Gastrocnemius medialis (tissue), 4 donors: ENCODE measurements at regions of chr6 and their contacts with region 1.

Region 1: GRCh38 chr6:5746053-5746758 is 260.5 kb downstream of the NRN1 start:
- DNase-seq: peak in 1 of 2 donors; percentile 53
- ATAC-seq: peak; percentile 73 to 80
- H3K4me3 ChIP-seq: no peak overlapping the region
- H3K27ac ChIP-seq: no peak overlapping the region
- H3K4me1 ChIP-seq: peaks cover 19 to 22% of the 10 kb centered on the region in 2 donors
- H3K27me3 ChIP-seq: no peaks in the 10 kb centered on the region
- CTCF ChIP-seq: peak in 4 of 5 experiments; percentile 21 to 53 (median 50)
- POLR2A ChIP-seq: no peak

Region 2: DNA sequence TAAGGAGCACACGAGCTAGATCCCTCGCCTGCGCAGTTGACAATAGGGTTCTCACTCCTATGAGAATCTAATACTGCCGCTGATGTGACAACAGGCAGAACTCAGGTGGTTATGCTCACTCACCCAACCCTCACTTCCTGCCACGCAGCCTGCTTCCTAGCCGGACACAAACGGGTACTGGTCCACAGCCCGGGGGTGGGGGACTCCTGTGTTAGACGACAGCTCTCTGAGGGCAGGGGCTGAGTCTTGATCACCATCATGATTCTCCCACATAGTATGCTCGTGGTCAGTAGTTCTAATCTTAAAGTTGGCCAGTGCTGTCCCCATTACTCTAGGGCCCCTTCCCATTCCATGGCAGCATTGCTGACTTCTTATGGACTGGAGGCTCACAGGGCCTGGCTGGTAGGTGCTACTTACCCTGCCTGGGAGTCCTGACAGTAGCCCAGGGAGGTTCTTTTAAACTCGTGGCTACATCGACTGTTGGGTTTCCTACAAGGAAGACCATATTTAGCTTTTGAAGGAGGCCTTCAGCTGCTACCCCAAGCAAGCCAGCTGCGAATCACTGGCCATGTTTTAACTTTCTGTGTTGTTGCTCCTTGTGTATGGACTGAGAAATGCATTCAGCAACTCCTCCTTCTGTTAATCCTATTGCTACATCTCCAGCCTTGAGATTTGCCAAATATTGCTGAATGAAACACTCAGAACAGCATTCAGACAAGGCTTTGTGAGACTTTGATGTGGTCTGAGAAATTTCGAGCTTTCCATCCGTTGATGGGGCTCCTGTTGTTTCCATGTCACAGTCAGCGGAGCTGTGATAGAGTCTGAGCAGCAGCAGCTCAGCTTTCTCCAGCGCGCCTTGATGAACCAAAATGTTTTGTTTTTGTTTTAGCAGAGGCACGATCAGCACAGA is 39.8 kb before region 1 on chr6:
- in situ Hi-C with region 1: no loop called
- intact Hi-C with region 1: no loop called
- DNase-seq: no peak
- ATAC-seq: no peak
- H3K4me3 ChIP-seq: no peak overlapping the region
- H3K27ac ChIP-seq: no peak overlapping the region
- H3K4me1 ChIP-seq: no peaks in the 10 kb centered on the region
- H3K27me3 ChIP-seq: no peaks in the 10 kb centered on the region
- CTCF ChIP-seq: no peak
- POLR2A ChIP-seq: no peak

Region 3: DNA sequence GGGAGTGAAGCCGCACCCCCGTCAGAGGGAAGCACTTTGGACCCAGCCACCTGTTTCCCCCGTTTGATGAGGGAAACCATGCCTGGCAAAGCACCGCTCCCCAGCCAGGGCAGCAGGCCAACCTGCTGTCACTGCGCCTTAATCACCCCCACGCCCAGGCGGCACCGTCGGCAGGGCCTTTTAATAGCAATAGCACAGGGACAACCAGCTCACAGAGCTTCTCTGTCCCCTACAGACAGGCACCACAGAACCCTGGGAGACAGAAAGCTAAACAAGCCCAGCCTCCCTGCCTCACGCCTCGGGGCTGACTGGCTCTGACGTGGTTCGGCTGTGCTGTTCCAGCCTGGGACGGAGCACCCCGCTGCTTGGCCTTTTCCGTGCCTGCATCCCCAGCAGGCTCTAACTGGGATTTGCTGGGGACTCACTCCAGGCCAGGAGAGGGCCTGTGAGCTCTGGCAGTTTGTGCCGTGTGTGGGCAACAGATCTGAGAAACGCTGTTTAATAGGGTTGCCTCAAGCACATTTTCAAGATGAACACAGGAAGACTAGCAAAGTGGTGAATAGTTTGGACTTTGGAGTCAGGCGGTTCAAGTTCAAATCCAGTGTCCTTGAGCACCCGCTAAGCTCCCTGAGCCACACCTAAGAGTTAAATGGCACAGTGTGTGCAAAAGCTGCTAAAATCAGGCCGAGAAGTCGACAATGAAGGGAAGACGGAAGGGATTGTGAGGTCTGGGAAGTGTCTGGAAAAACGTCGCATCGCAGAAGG is 36.8 kb after region 1 on chr6:
- in situ Hi-C with region 1: no loop called
- intact Hi-C with region 1: loop called (anchors 1 kb)
- DNase-seq: peak; percentile 52 to 66
- ATAC-seq: peak; percentile 88
- H3K4me3 ChIP-seq: peak overlapping the region in 1 of 4 donors; percentile 27
- H3K27ac ChIP-seq: peak overlapping the region; percentile 67 to 79 (median 72)
- H3K4me1 ChIP-seq: peaks cover 6 to 10% of the 10 kb centered on the region in 2 donors
- H3K27me3 ChIP-seq: no peaks in the 10 kb centered on the region
- CTCF ChIP-seq: peak in 1 of 5 experiments; percentile 10
- POLR2A ChIP-seq: peak in 1 of 2 donors; percentile 17

Region 4: GRCh38 chr6:5898559-5898958 is 152.4 kb after region 1 on chr6:
- in situ Hi-C with region 1: no loop called
- intact Hi-C with region 1: no loop called
- DNase-seq: no peak
- ATAC-seq: no peak
- H3K4me3 ChIP-seq: no peak overlapping the region
- H3K27ac ChIP-seq: no peak overlapping the region
- H3K4me1 ChIP-seq: no peaks in the 10 kb centered on the region
- H3K27me3 ChIP-seq: no peaks in the 10 kb centered on the region
- CTCF ChIP-seq: no peak
- POLR2A ChIP-seq: no peak

Region 5: GRCh38 chr6:5950361-5950785 is 204.2 kb after region 1 on chr6:
- in situ Hi-C with region 1: no loop called
- intact Hi-C with region 1: no loop called
- DNase-seq: no peak
- ATAC-seq: no peak
- H3K4me3 ChIP-seq: no peak overlapping the region
- H3K27ac ChIP-seq: no peak overlapping the region
- H3K4me1 ChIP-seq: no peaks in the 10 kb centered on the region
- H3K27me3 ChIP-seq: no peaks in the 10 kb centered on the region
- CTCF ChIP-seq: peak in 2 of 5 experiments; percentile 31 to 42
- POLR2A ChIP-seq: no peak

Region 6: GRCh38 chr6:6008648-6009421 is 262.6 kb after region 1 on chr6:
- in situ Hi-C with region 1: no loop called
- intact Hi-C with region 1: loop called (anchors 10 kb)
- DNase-seq: no peak
- ATAC-seq: peak; percentile 53
- H3K4me3 ChIP-seq: peak overlapping the region; percentile 47 to 66 (median 54)
- H3K27ac ChIP-seq: peak overlapping the region; percentile 65 to 79 (median 73)
- H3K4me1 ChIP-seq: peaks cover 34 to 38% of the 10 kb centered on the region in 2 donors
- H3K27me3 ChIP-seq: peaks cover 66 to 86% (median 71%) of the 10 kb centered on the region in 3 donors
- CTCF ChIP-seq: no peak
- POLR2A ChIP-seq: peak in 1 of 2 donors; percentile 31

Region 7: DNA sequence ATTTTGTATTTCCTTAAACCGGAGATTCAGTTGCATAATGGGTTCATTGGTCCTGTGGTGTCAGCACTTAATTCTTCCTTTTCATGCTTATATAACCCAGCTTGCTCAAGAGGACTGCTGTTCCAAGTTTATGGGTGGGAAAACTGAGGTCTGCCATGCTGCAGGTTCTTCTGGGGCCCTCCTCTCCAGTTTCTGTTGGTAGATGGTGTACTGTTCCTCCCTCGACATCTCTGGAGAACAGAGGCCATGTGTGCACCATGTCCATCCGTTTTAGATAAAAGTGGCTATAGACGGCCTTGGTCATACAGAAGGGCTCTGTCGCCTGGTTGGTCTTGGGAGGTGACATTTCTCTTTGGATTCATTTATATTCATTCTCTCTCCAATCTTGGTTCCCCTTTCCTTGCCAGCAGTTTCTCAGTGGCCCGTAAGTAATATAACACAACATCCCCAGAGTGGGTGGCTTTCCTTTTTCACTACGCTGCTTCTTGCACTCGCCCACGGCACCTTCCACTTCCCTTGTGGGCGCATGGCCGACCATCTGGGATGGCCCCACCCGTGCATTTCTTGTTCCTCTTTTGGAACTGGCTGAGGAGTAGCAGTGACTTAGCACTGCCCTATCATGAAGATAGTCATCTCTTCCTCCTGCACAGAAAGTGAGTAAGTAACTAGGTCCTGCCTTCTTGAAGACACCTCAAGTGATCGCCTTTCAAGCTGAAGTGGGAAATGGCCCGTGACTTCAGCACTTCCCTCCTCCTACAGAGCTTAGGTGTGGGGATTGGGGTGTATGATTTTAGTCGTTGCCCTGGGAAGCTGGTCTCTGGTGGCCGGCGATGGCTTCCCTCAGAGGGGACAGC is 1455.7 kb after region 1 on chr6:
- in situ Hi-C with region 1: no loop called
- intact Hi-C with region 1: no loop called
- DNase-seq: peak in 1 of 2 donors; percentile 48
- ATAC-seq: peak in 1 of 2 donors; percentile 48
- H3K4me3 ChIP-seq: no peak overlapping the region
- H3K27ac ChIP-seq: no peak overlapping the region
- H3K4me1 ChIP-seq: peaks cover 11 to 13% of the 10 kb centered on the region in 2 donors
- H3K27me3 ChIP-seq: no peaks in the 10 kb centered on the region
- CTCF ChIP-seq: no peak
- POLR2A ChIP-seq: no peak